HepG2 (cell line): ENCODE measurements at regions of chr1 and their contacts with region 1.

Region 1: GRCh38 chr1:227999056-227999930 is 7.5 kb upstream of the WNT3A start:
- DNase-seq: peak; percentile 65
- ATAC-seq: peak; percentile 94
- H3K4me3 ChIP-seq: no peak overlapping the region
- H3K27ac ChIP-seq: no peak overlapping the region
- H3K4me1 ChIP-seq: no peaks in the 10 kb centered on the region
- H3K27me3 ChIP-seq: peaks cover 4 to 18% of the 10 kb centered on the region in 2 experiments; a peak in 4 of 5 replicates
- CTCF ChIP-seq: peak; percentile 81
- EP300 ChIP-seq: no peak
- POLR2A ChIP-seq: no peak
- RAD21 ChIP-seq: peak; percentile 87

Region 2: GRCh38 chr1:228073857-228074545 is 74.7 kb after region 1 on chr1:
- CTCF ChIA-PET with region 1: no interaction called
- POLR2A ChIA-PET with region 1: no interaction called
- in situ Hi-C with region 1: loop called (anchors 5 kb)
- intact Hi-C with region 1: loop called (anchors 1 kb)
- DNase-seq: no peak
- ATAC-seq: peak; percentile 59
- H3K4me3 ChIP-seq: no peak overlapping the region
- H3K27ac ChIP-seq: no peak overlapping the region
- H3K4me1 ChIP-seq: no peaks in the 10 kb centered on the region
- H3K27me3 ChIP-seq: peaks cover 9 to 23% of the 10 kb centered on the region in 2 experiments; a peak in 3 of 5 replicates
- CTCF ChIP-seq: peak; percentile 55
- EP300 ChIP-seq: no peak
- POLR2A ChIP-seq: no peak
- RAD21 ChIP-seq: 0 out of 2 replicates have a peak, but pooled peaks have one; percentile 23

Region 3: GRCh38 chr1:228198977-228199590 is 199.8 kb after region 1 on chr1:
- CTCF ChIA-PET with region 1: no interaction called
- POLR2A ChIA-PET with region 1: no interaction called
- in situ Hi-C with region 1: loop called (anchors 10 kb)
- intact Hi-C with region 1: no loop called
- DNase-seq: no peak
- ATAC-seq: no peak
- H3K4me3 ChIP-seq: no peak overlapping the region
- H3K27ac ChIP-seq: no peak overlapping the region
- H3K4me1 ChIP-seq: no peaks in the 10 kb centered on the region
- H3K27me3 ChIP-seq: peaks cover 0 to 6% of the 10 kb centered on the region in 2 experiments; a peak in 1 of 5 replicates
- CTCF ChIP-seq: no peak
- EP300 ChIP-seq: no peak
- POLR2A ChIP-seq: no peak
- RAD21 ChIP-seq: no peak